HepG2 (cell line): ENCODE measurements at regions of chr9 and their contacts with region 1.

Region 1: GRCh38 chr9:126398403-126399058 is 71.9 kb downstream of the MVB12B start:
- DNase-seq: peak; percentile 37
- ATAC-seq: peak; percentile 94
- H3K4me3 ChIP-seq: no peak overlapping the region
- H3K27ac ChIP-seq: no peak overlapping the region
- H3K4me1 ChIP-seq: no peaks in the 10 kb centered on the region
- H3K27me3 ChIP-seq: no peaks in the 10 kb centered on the region
- CTCF ChIP-seq: peak; percentile 98
- EP300 ChIP-seq: no peak
- POLR2A ChIP-seq: no peak
- RAD21 ChIP-seq: peak; percentile 94

Region 2: GRCh38 chr9:125407974-125408900 is 990.3 kb before region 1 on chr9:
- CTCF ChIA-PET with region 1: no interaction called
- POLR2A ChIA-PET with region 1: no interaction called
- in situ Hi-C with region 1: loop called (anchors 10 kb)
- intact Hi-C with region 1: no loop called
- DNase-seq: peak; percentile 39
- ATAC-seq: peak; percentile 84
- H3K4me3 ChIP-seq: peak overlapping the region; percentile 72 to 78 (median 78)
- H3K27ac ChIP-seq: no peak overlapping the region
- H3K4me1 ChIP-seq: peaks cover 52% of the 10 kb centered on the region
- H3K27me3 ChIP-seq: peaks cover 0 to 34% of the 10 kb centered on the region in 2 experiments; a peak in 4 of 5 replicates
- CTCF ChIP-seq: peak; percentile 96
- EP300 ChIP-seq: no peak
- POLR2A ChIP-seq: no peak
- RAD21 ChIP-seq: peak; percentile 95

Region 3: DNA sequence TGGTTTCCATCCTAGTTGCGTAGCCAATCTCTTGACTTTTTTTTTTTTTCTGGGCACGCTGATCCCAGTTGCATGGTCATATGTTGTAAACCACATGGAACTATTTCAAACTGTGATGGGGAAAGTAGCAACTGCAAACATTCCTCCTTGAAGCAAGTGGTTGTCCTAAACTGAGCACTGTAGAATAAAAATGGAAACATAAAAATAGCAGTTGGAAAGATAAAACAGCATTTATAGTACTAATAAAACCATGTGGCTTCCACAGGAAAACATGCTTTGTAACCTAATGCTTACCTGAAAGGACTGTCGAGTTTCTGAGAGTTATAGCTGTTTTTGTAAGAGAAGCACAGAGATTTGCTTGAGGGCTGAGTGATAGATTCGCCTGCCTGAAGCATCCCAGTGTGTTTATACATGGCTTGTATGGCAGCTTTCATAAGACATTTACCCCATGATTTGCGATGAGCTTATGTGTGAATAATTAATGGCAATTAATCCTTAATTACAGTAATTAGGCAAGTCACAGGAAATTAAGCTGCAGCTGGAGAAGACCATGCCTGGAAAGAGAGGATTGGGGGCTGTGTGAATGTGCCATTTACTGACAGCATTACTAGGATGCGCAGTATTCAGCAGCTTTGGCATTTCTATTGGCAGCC is 514.8 kb before region 1 on chr9:
- CTCF ChIA-PET with region 1: no interaction called
- POLR2A ChIA-PET with region 1: no interaction called
- in situ Hi-C with region 1: no loop called
- intact Hi-C with region 1: loop called (anchors 5 kb)
- DNase-seq: no peak
- ATAC-seq: no peak
- H3K4me3 ChIP-seq: no peak overlapping the region
- H3K27ac ChIP-seq: no peak overlapping the region
- H3K4me1 ChIP-seq: peaks cover 29% of the 10 kb centered on the region
- H3K27me3 ChIP-seq: no peaks in the 10 kb centered on the region
- CTCF ChIP-seq: no peak
- EP300 ChIP-seq: no peak
- POLR2A ChIP-seq: no peak
- RAD21 ChIP-seq: no peak

Region 4: GRCh38 chr9:126317513-126317912 is 81.0 kb before region 1 on chr9:
- CTCF ChIA-PET with region 1: interaction called, 17 read pairs
- POLR2A ChIA-PET with region 1: no interaction called
- in situ Hi-C with region 1: no loop called
- intact Hi-C with region 1: no loop called
- DNase-seq: peak; percentile 47
- ATAC-seq: peak; percentile 56
- H3K4me3 ChIP-seq: no peak overlapping the region
- H3K27ac ChIP-seq: no peak overlapping the region
- H3K4me1 ChIP-seq: peaks cover 67% of the 10 kb centered on the region
- H3K27me3 ChIP-seq: peaks cover 0 to 3% of the 10 kb centered on the region in 2 experiments; a peak in 2 of 5 replicates
- CTCF ChIP-seq: peak; percentile 56
- EP300 ChIP-seq: no peak
- POLR2A ChIP-seq: no peak
- RAD21 ChIP-seq: peak; percentile 43; the same call in 1 of the 2 replicates